MCF 10A (cell line): ENCODE measurements at regions of chr20 and their contacts with region 1.

Region 1: DNA sequence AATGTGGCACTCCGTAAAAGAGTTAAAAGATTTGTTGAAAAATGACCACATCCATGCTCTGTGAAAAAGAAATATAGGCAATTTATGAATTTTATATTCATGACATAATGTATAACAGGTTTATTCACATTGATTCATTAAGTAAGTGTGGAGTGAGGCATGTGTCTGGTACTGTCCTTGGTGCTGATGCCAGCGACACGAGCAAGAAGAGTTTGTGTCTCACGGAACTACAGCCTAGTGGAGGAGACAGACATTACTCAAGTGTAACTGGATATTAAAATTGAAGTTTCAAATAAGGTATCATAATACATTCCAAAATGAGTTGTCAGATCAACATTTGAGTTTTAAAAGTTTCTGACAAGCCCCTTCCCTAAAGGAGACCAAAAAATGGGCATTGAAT is 158.2 kb upstream of the PRND start:
- DNase-seq: peak; percentile 73
- H3K4me3 Mint-ChIP-seq: no peak overlapping the region
- H3K27ac Mint-ChIP-seq: no peak overlapping the region
- H3K4me1 Mint-ChIP-seq: no peaks in the 10 kb centered on the region
- H3K27me3 Mint-ChIP-seq: peaks cover 18% of the 10 kb centered on the region
- CTCF ChIP-seq: peak; percentile 27

Region 2: GRCh38 chr20:3777716-3778629 is 785.6 kb before region 1 on chr20:
- CTCF ChIA-PET with region 1: no interaction called
- POLR2A ChIA-PET with region 1: no interaction called
- intact Hi-C with region 1: no loop called
- DNase-seq: no peak
- H3K4me3 Mint-ChIP-seq: no peak overlapping the region
- H3K27ac Mint-ChIP-seq: no peak overlapping the region
- H3K4me1 Mint-ChIP-seq: peaks cover 15% of the 10 kb centered on the region
- H3K27me3 Mint-ChIP-seq: no peaks in the 10 kb centered on the region
- CTCF ChIP-seq: no peak

Region 3: DNA sequence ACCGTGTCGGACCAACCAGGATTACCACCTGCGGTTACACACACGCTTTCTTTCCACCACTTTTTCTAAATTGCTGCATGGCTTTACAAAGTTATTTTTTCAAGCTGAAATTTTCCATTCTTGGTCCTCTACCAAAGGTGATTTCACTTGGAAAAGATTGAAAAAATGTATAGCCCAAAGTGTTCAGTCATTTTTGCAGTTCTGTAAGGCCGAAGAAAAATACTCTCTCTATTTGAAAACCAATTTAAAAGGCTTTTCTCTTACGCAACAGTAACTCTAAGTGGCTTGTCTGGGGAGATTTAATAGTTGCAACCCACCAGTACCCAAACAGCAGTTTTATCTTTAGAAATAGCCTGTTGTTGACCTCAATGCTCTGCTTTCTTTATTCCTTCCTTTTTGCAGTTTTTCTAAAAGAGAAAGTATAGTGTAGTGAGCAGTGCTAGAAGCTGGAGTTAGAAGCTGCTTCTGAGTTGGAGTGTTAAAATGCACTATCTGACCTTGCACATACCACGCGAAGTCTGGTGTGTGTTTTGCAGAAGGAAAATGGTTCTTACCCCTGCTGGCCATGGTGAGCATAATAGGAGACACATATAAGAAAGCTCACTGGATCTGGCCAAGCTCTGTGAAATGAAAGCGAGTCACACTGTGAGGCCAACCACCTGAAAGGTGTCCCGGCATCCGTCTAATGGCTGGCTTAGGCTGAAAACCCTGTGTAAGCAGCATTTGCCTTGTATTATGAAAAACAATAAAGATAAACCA is 113.4 kb before region 1 on chr20:
- CTCF ChIA-PET with region 1: no interaction called
- POLR2A ChIA-PET with region 1: no interaction called
- intact Hi-C with region 1: loop called (anchors 10 kb)
- DNase-seq: peak; percentile 48
- H3K4me3 Mint-ChIP-seq: no peak overlapping the region
- H3K27ac Mint-ChIP-seq: peak overlapping the region; percentile 9
- H3K4me1 Mint-ChIP-seq: peaks cover 24% of the 10 kb centered on the region
- H3K27me3 Mint-ChIP-seq: no peaks in the 10 kb centered on the region
- CTCF ChIP-seq: no peak